Ovary (tissue), 10 donors: ENCODE measurements at regions of chr5 and their contacts with region 1.

Region 1: DNA sequence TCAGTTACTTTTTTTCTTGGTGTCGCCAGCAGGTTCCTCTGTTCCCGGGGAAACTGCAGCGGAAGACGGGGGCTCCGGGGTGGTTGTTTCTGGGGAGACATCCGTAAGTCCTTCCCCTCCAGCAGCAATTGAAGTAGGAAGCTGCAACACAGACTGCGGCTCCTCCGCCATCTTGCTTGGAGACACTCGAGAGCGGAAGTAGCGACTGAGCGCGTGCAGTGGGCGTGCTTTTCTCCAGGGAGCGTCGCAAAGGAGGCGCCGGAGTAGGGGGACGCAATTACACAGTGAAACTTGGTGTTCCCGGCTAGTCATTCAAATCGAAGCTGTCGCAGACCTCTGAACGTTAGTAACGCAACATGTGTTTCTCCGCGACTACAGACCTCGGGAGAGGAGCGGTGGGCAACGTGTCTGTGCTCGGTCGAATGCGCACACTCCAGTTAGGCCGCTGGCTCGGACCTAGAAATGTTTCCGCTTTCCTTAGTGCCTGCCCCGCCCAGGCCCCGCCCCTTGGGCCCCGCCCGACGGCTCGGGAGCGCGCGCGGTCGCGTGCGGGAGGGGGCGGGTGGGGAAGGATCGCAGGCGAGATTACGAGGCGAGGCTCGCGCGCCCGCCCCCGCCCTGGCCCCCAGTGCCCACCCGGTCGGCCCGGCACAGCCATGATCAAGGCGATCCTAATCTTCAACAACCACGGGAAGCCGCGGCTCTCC is at the starts of genes AP3S1 and ATG12:
- DNase-seq: peak; percentile 87 to 93 (median 89)
- H3K4me3 ChIP-seq: peak within 1 kb of the TSS; percentile 98
- H3K27ac ChIP-seq: peak within 1 kb of the TSS; percentile 87 to 89
- H3K4me1 ChIP-seq: peaks cover 15% of the 10 kb centered on the region
- H3K27me3 ChIP-seq: no peaks in the 10 kb centered on the region
- CTCF ChIP-seq: no peak
- EP300 ChIP-seq: peak; percentile 33
- POLR2A ChIP-seq: peak; percentile 52
- total RNA-seq, gene AP3S1: 49.6 to 97.3 (median 83.7) TPM
- total RNA-seq, gene ATG12: 29.4 to 49.4 (median 33.8) TPM

Region 2: GRCh38 chr5:115634343-115635132 is 207.0 kb before region 1 on chr5:
- intact Hi-C with region 1: loop called in 1 of 4 experiments (anchors 5 kb)
- DNase-seq: peak; percentile 76 to 90 (median 90)
- H3K4me3 ChIP-seq: peak overlapping the region; percentile 28
- H3K27ac ChIP-seq: peak overlapping the region in 1 of 2 donors; percentile 34
- H3K4me1 ChIP-seq: no peaks in the 10 kb centered on the region
- H3K27me3 ChIP-seq: no peaks in the 10 kb centered on the region
- CTCF ChIP-seq: peak; percentile 50 to 85 (median 76)
- EP300 ChIP-seq: no peak
- POLR2A ChIP-seq: no peak

Region 3: GRCh38 chr5:115831163-115831768 is 10.3 kb before region 1 on chr5:
- intact Hi-C with region 1: no loop called
- DNase-seq: peak in 1 of 5 donors; percentile 32
- H3K4me3 ChIP-seq: no peak overlapping the region
- H3K27ac ChIP-seq: no peak overlapping the region
- H3K4me1 ChIP-seq: no peaks in the 10 kb centered on the region
- H3K27me3 ChIP-seq: no peaks in the 10 kb centered on the region
- CTCF ChIP-seq: peak; percentile 48 to 52 (median 50)
- EP300 ChIP-seq: no peak
- POLR2A ChIP-seq: no peak